ENCODE measurements at regions of chr3 and their contacts with region 1.

Region 1: GRCh38 chr3:184335661-184336546 is 1.5 kb upstream of the FAM131A start:
- DNase-seq: peak; percentile 92
- ATAC-seq: peak; percentile 80
- H3K4me3 ChIP-seq: peak overlapping the region; percentile 51 to 83 (median 73)
- H3K4me3 Mint-ChIP-seq: peak overlapping the region; percentile 94
- H3K27ac ChIP-seq: peak overlapping the region; percentile 93
- H3K27ac Mint-ChIP-seq: peak overlapping the region; percentile 90
- H3K4me1 ChIP-seq: peaks cover 14 to 25% of the 10 kb centered on the region in 2 donors
- H3K4me1 Mint-ChIP-seq: peaks cover 30% of the 10 kb centered on the region
- H3K27me3 ChIP-seq: peaks cover 0 to 3% (median 0%) of the 10 kb centered on the region in 4 experiments
- H3K27me3 Mint-ChIP-seq: no peaks in the 10 kb centered on the region
- CTCF ChIP-seq: no peak

Region 2: GRCh38 chr3:184314363-184314699 is 21.6 kb before region 1 on chr3 and contains the start of gene EIF4G1:
- CTCF ChIA-PET with region 1: no interaction called
- POLR2A ChIA-PET with region 1: no interaction called
- intact Hi-C with region 1: loop called (anchors 1 kb)
- DNase-seq: peak; percentile 96
- ATAC-seq: peak; percentile 90
- H3K4me3 ChIP-seq: peak within 1 kb of the TSS; percentile 43 to 71 (median 61)
- H3K4me3 Mint-ChIP-seq: peak within 1 kb of the TSS; percentile 90
- H3K27ac ChIP-seq: peak within 1 kb of the TSS; percentile 73 to 89
- H3K27ac Mint-ChIP-seq: peak within 1 kb of the TSS; percentile 88
- H3K4me1 ChIP-seq: peaks cover 13 to 23% of the 10 kb centered on the region in 2 donors
- H3K4me1 Mint-ChIP-seq: peaks cover 31% of the 10 kb centered on the region
- H3K27me3 ChIP-seq: no peaks in the 10 kb centered on the region
- H3K27me3 Mint-ChIP-seq: no peaks in the 10 kb centered on the region
- CTCF ChIP-seq: no peak
- total RNA-seq, gene EIF4G1: 160 TPM in 2 replicates

Region 3: DNA sequence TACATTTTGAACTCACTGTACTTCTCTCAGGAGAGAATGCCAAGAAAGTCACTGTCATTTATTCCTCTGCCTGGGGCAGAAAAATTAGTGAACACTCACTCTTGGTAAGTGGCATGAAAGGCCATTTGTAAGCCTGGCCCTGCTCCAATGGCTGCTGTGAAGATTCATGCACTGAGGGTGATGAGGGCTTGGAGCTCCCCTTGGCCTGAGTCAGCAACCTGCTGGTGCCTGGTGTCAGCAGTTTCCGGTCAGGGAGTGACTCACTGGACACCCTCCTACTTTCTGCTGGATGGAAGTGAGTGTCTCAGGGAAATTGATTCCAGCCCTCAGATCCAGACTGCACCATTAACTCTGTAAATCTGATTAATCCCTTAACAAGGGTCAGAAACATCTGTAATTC is 1564.3 kb after region 1 on chr3:
- CTCF ChIA-PET with region 1: no interaction called
- POLR2A ChIA-PET with region 1: no interaction called
- intact Hi-C with region 1: no loop called
- DNase-seq: no peak
- ATAC-seq: no peak
- H3K4me3 ChIP-seq: no peak overlapping the region
- H3K4me3 Mint-ChIP-seq: no peak overlapping the region
- H3K27ac ChIP-seq: no peak overlapping the region
- H3K27ac Mint-ChIP-seq: no peak overlapping the region
- H3K4me1 ChIP-seq: no peaks in the 10 kb centered on the region
- H3K4me1 Mint-ChIP-seq: no peaks in the 10 kb centered on the region
- H3K27me3 ChIP-seq: no peaks in the 10 kb centered on the region
- H3K27me3 Mint-ChIP-seq: peaks cover 19% of the 10 kb centered on the region
- CTCF ChIP-seq: no peak

Measured in B cell (primary cell).